ENCODE measurements at regions of chr7 and their contacts with region 1.

Region 1: GRCh38 chr7:28298870-28299518 is 113.3 kb upstream of the CREB5 start:
- DNase-seq: peak; percentile 78
- ATAC-seq: peak; percentile 98
- H3K4me3 ChIP-seq: no peak overlapping the region
- H3K27ac ChIP-seq: no peak overlapping the region
- H3K4me1 ChIP-seq: no peaks in the 10 kb centered on the region
- H3K27me3 ChIP-seq: peaks cover 1% of the 10 kb centered on the region; the same call in 1 of the 2 replicates
- CTCF ChIP-seq: peak; percentile 66
- POLR2A ChIP-seq: no peak
- RAD21 ChIP-seq: peak; percentile 76

Region 2: DNA sequence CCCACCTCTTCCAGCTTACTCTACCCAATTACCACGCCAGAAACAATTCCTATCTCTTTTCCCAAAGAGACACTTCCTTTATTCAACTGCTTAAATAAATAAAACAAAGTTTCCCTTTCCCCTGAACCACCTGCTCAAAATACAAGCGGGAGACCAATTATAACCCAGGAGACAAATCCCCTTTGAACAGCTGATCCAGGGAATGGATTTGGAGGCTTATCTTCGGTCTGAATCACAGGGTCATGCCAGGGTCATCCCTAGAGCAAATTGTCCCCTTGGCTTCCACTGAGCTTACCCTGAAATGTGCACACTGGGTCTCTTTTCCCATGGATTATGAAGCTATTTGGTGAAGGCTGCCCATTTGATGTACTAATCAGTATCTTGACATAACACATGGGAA is 18.5 kb before region 1 on chr7:
- CTCF ChIA-PET with region 1: no interaction called
- POLR2A ChIA-PET with region 1: no interaction called
- dilution Hi-C with region 1: no loop called
- in situ Hi-C with region 1: no loop called
- intact Hi-C with region 1: no loop called
- DNase-seq: no peak
- ATAC-seq: no peak
- H3K4me3 ChIP-seq: no peak overlapping the region
- H3K27ac ChIP-seq: no peak overlapping the region
- H3K4me1 ChIP-seq: no peaks in the 10 kb centered on the region
- H3K27me3 ChIP-seq: peaks cover 12% of the 10 kb centered on the region
- CTCF ChIP-seq: no peak
- POLR2A ChIP-seq: no peak
- RAD21 ChIP-seq: no peak

Region 3: DNA sequence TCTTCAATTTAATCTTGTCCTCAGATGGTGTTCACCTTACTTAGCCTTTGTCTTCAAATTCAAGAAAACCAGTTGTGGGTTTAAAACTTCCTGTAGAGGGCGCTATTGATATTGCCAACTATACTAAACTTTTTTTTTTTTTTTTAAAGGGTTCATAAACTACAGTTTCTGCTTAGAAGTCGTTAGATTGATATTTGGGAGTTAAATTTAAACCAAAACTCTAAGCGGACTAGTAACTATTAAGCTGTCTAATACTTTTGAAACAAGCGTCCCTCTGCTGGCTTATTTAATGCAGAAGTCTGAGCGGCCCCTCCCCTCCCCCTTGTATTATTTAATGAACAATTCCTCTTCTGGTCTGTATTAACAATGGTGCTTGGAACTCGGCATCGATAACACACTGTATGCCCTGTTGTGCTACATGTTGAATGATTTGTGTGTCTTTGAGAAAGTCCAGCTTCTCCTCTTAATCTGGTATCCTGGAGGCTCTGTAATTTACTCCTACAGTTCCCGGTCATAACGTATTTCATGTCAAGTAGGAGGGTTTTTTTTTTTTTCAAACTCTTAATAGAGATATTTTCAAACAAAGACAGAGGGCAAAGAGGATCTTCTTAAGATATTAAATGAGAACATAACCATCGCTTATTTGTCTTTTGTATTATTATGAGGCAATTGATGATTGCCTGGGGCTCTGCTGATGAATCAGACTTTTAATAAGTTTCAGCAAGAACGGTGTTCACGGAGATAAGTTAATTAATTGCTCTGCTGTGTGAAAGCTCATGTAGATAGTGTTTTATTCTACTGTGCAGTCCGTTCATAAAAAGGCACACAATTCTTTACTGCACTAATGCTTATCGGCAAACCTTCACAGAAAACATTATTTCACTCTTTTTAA is 90.8 kb after region 1 on chr7:
- CTCF ChIA-PET with region 1: no interaction called
- POLR2A ChIA-PET with region 1: no interaction called
- dilution Hi-C with region 1: no loop called
- in situ Hi-C with region 1: no loop called
- intact Hi-C with region 1: loop called (anchors 2 kb)
- DNase-seq: peak; percentile 79
- ATAC-seq: peak; percentile 75
- H3K4me3 ChIP-seq: peak overlapping the region; percentile 34; the same call in 1 of the 2 replicates
- H3K27ac ChIP-seq: no peak overlapping the region
- H3K4me1 ChIP-seq: 0 out of 2 replicates have a peak, but pooled peaks cover 2% of the 10 kb centered on the region
- H3K27me3 ChIP-seq: peaks cover 7% of the 10 kb centered on the region; the same call in 1 of the 2 replicates
- CTCF ChIP-seq: peak; percentile 80
- POLR2A ChIP-seq: no peak
- RAD21 ChIP-seq: peak; percentile 80

Region 4: DNA sequence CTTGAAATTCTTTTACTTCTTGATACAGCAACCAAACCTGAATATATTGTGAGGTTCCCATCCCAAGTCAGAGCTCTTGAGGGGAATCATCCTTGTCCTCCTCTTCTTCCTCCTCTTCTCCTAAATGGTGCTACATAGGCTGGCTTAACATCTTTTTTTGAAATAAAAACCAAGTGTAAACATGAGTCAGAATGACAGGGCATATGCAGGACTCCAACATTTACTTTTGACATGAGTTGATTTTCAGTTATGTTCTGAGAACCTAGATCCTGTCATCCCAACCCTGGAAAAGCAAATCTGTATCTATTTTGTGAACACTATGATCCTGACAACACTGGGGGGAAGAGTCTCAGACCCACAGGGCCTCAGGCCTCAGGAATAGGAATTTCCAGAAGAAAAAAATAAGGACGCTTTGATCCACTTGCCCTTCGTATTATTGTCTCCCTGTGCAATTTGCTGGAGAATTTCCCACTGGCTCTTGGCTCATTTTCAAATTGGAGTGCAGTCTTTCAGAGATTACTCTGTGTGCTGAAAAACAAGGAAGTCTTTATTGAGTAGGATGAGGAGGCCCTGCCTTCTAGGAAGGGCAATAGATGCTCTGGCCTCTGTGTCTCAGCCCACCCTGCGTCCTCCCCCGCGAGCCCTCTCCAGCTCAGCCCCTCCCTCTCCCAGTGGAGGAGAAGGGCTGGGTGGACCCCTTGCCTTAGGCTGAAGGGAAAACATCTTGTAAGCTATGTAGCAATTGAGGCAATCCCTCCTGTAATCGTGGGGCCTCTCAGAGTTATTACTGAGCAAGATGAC is 234.9 kb after region 1 on chr7:
- CTCF ChIA-PET with region 1: no interaction called
- POLR2A ChIA-PET with region 1: no interaction called
- dilution Hi-C with region 1: no loop called
- in situ Hi-C with region 1: no loop called
- intact Hi-C with region 1: loop called (anchors 5 kb)
- DNase-seq: peak; percentile 78
- ATAC-seq: peak; percentile 56
- H3K4me3 ChIP-seq: no peak overlapping the region
- H3K27ac ChIP-seq: 0 out of 2 replicates have a peak overlapping the region, but pooled peaks have one; percentile 21
- H3K4me1 ChIP-seq: peaks cover 9% of the 10 kb centered on the region
- H3K27me3 ChIP-seq: no peaks in the 10 kb centered on the region
- CTCF ChIP-seq: no peak
- POLR2A ChIP-seq: no peak
- RAD21 ChIP-seq: no peak

Region 5: GRCh38 chr7:28685644-28686417 is 386.8 kb after region 1 on chr7:
- CTCF ChIA-PET with region 1: no interaction called
- POLR2A ChIA-PET with region 1: no interaction called
- dilution Hi-C with region 1: no loop called
- in situ Hi-C with region 1: no loop called
- intact Hi-C with region 1: loop called (anchors 1 kb)
- DNase-seq: peak; percentile 99
- ATAC-seq: peak; percentile 96
- H3K4me3 ChIP-seq: peak overlapping the region; percentile 45
- H3K27ac ChIP-seq: peak overlapping the region; percentile 71
- H3K4me1 ChIP-seq: peaks cover 4% of the 10 kb centered on the region
- H3K27me3 ChIP-seq: no peaks in the 10 kb centered on the region
- CTCF ChIP-seq: no peak
- POLR2A ChIP-seq: peak; percentile 93
- RAD21 ChIP-seq: 0 out of 2 replicates have a peak, but pooled peaks have one; percentile 4

Region 6: GRCh38 chr7:28853834-28854749 is 555.1 kb after region 1 on chr7:
- CTCF ChIA-PET with region 1: no interaction called
- POLR2A ChIA-PET with region 1: no interaction called
- dilution Hi-C with region 1: no loop called
- in situ Hi-C with region 1: loop called (anchors 10 kb)
- intact Hi-C with region 1: loop called (anchors 1 kb)
- DNase-seq: peak; percentile 46
- ATAC-seq: peak; percentile 78
- H3K4me3 ChIP-seq: peak overlapping the region; percentile 41
- H3K27ac ChIP-seq: no peak overlapping the region
- H3K4me1 ChIP-seq: peaks cover 9% of the 10 kb centered on the region
- H3K27me3 ChIP-seq: peaks cover 17% of the 10 kb centered on the region
- CTCF ChIP-seq: peak; percentile 73
- POLR2A ChIP-seq: no peak
- RAD21 ChIP-seq: peak; percentile 71

Region 7: DNA sequence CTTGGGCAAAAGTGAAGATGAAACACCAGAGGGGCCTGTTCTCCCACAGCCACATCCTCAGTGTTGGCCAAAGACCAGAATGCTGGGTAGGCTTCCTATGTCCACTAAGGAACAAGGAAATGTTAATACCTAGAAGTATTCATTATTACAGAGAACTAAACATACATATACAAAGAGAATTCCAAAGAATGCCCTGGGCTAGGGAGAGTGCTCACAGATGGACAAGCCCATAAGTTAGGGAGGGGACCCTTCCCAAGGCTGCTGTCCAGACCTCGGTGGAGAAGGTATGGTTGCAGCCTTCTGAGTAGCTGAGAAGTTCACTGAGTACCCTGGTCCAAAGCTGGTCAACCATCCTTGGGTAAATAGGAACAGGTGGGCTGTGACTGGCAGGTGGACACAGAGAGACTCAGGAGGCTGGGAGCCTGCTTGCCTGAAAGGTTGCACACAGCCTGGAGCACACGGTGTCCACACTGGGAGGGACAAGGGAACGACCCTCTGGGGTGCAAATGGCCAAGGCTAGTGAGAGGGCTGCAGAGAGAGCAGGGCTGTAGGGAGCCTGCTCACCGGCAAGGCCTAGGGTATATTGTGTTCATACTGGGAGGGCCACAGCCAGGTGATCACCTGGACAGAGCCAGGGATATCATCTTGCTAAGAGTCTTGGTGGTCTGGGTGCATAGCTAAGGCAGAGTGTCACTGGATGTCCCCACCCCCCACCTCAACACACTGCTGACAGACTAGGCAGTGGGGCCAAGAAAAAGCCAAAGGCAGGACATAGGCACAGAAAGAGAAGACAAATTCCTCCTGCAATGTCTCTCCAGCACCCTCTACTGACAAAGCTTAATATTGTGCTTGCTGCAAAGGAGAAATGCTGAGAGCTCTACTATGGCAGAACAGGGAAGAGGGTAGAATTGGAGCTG is 807.0 kb after region 1 on chr7:
- CTCF ChIA-PET with region 1: no interaction called
- POLR2A ChIA-PET with region 1: no interaction called
- dilution Hi-C with region 1: no loop called
- in situ Hi-C with region 1: loop called (anchors 25 kb)
- intact Hi-C with region 1: loop called (anchors 1 kb)
- DNase-seq: peak; percentile 60
- ATAC-seq: peak; percentile 97
- H3K4me3 ChIP-seq: no peak overlapping the region
- H3K27ac ChIP-seq: no peak overlapping the region
- H3K4me1 ChIP-seq: no peaks in the 10 kb centered on the region
- H3K27me3 ChIP-seq: peaks cover 7% of the 10 kb centered on the region
- CTCF ChIP-seq: peak; percentile 87
- POLR2A ChIP-seq: no peak
- RAD21 ChIP-seq: peak; percentile 79

Measured in IMR-90 (cell line).